Colonic mucosa (tissue), 4 donors: ENCODE measurements at regions of chr11 and their contacts with region 1.

Region 1: GRCh38 chr11:120432056-120433018 is 79.2 kb upstream of the GRIK4 start:
- DNase-seq: peak; percentile 26
- H3K4me3 ChIP-seq: no peak overlapping the region
- H3K27ac ChIP-seq: peak overlapping the region; percentile 37
- H3K4me1 ChIP-seq: no peaks in the 10 kb centered on the region
- H3K27me3 ChIP-seq: no peaks in the 10 kb centered on the region
- CTCF ChIP-seq: no peak

Region 2: DNA sequence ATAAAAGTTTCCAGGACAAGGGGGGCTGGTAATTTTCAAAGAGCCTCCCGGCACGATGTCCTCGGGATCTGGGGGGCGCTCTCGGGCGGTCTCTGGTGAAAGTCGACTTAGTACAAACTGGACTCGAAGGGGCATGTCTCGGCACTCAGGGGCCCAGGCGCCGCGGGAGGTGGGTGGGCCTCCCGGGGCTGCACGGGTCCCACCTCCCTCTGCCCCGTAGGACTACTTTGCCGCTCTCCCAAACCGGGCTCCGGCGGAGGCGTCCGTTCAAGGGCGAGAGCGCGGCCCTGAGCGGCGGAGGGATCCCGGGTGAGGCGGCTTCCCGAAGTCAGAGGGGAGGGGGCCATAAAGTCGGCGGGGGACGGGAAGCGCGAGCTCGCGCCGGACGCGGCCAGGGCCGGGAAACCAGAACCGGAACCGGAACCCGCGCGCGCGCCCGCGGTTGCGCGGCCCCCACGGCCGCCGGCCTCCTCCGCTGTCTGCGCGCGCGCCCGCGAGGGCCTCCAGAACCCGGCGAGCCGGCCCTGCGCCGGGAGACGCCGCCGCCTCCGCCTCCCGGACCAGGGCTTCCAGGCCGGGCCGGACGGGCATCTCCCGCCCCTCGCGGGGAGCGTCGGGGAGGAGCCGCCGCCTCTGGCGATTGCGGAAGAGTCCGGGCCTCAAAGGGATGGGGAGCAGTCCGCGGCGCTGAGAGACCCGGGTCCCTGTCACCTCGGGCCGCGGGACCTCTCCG is 96.3 kb before region 1 on chr11 and contains the start of gene ARHGEF12:
- intact Hi-C with region 1: loop called (anchors 10 kb)
- DNase-seq: peak; percentile 96
- H3K4me3 ChIP-seq: peak within 1 kb of the TSS; percentile 96
- H3K27ac ChIP-seq: peak within 1 kb of the TSS; percentile 96
- H3K4me1 ChIP-seq: peaks cover 8% of the 10 kb centered on the region
- H3K27me3 ChIP-seq: no peaks in the 10 kb centered on the region
- CTCF ChIP-seq: no peak
- total RNA-seq, gene ARHGEF12: 66.7 to 103 TPM

Region 3: DNA sequence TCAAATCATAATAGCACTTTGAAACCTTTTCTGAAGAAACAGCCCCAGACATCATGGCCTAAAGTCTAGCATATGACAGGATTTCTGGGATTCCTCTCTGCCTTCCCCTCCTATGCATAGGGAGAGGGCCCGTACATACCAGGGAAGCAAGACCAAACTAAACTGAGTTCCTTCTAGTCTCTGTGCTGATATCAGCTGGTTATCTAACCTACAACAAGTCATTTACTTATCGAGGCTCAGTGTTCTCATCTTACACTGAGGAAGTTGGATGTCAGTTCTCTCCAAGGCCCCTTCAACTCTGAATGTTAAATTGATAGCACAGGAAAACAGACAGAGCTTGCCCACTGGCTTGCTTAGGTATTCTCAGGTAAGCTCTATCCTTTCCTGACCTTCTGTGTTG is 62.3 kb after region 1 on chr11:
- intact Hi-C with region 1: no loop called
- DNase-seq: no peak
- H3K4me3 ChIP-seq: no peak overlapping the region
- H3K27ac ChIP-seq: no peak overlapping the region
- H3K4me1 ChIP-seq: no peaks in the 10 kb centered on the region
- H3K27me3 ChIP-seq: no peaks in the 10 kb centered on the region
- CTCF ChIP-seq: no peak